Keratinocyte (primary cell): ENCODE measurements at regions of chr4 and their contacts with region 1.

Region 1: DNA sequence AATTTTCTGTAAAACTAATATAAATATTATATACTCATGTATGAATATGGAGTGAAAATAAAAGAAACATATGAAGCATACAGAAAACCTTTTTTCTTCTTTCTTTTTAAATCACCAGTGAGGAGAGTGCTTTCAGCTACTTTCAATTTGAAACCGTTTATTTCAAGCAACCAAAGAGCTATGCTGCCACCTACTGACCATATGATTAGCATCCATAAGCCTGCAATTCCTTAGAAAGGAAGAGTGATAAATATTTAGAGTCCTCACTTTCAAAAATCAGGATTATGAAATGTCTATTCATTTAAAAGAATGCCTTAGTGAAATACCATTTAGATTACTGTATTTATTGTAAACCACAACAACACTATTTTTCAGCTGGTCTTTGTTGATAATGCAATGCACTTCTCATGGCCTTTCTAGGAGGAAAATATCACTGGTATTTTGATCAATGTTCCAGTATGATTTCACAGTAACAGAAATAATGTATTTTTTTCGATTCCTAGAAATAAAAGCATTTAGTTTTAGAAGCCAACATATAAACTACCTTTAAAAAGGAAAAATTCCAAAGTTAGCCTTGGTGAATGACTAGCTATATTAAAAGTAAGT is 667.6 kb downstream of the PCDH18 start:
- DNase-seq: peak; percentile 4
- H3K4me3 ChIP-seq: no peak overlapping the region
- H3K27ac ChIP-seq: no peak overlapping the region
- H3K4me1 ChIP-seq: no peaks in the 10 kb centered on the region
- H3K27me3 ChIP-seq: no peaks in the 10 kb centered on the region
- CTCF ChIP-seq: peak in 2 of 3 experiments; percentile 61 to 64

Region 2: GRCh38 chr4:135900956-135901355 is 963.7 kb before region 1 on chr4:
- dilution Hi-C with region 1: loop called (anchors 25 kb)
- DNase-seq: no peak
- H3K4me3 ChIP-seq: no peak overlapping the region
- H3K27ac ChIP-seq: no peak overlapping the region
- H3K4me1 ChIP-seq: no peaks in the 10 kb centered on the region
- H3K27me3 ChIP-seq: no peaks in the 10 kb centered on the region
- CTCF ChIP-seq: no peak

Region 3: GRCh38 chr4:136918772-136919171 is 54.1 kb after region 1 on chr4:
- dilution Hi-C with region 1: no loop called
- DNase-seq: no peak
- H3K4me3 ChIP-seq: no peak overlapping the region
- H3K27ac ChIP-seq: no peak overlapping the region
- H3K4me1 ChIP-seq: no peaks in the 10 kb centered on the region
- H3K27me3 ChIP-seq: no peaks in the 10 kb centered on the region
- CTCF ChIP-seq: no peak